ENCODE measurements at regions of chr9 and their contacts with region 1.

Region 1: GRCh38 chr9:7053903-7054302 is 296.1 kb downstream of the KDM4C start:
- DNase-seq: no peak
- H3K4me3 ChIP-seq: no peak overlapping the region
- H3K27ac ChIP-seq: no peak overlapping the region
- H3K4me1 ChIP-seq: no peaks in the 10 kb centered on the region
- H3K27me3 ChIP-seq: no peaks in the 10 kb centered on the region
- CTCF ChIP-seq: no peak

Region 2: GRCh38 chr9:6230037-6230760 is 823.7 kb before region 1 on chr9:
- CTCF ChIA-PET with region 1: no interaction called
- POLR2A ChIA-PET with region 1: no interaction called
- intact Hi-C with region 1: no loop called
- DNase-seq: no peak
- H3K4me3 ChIP-seq: no peak overlapping the region
- H3K27ac ChIP-seq: no peak overlapping the region
- H3K4me1 ChIP-seq: no peaks in the 10 kb centered on the region; the same call in 1 of the 2 replicates
- H3K27me3 ChIP-seq: no peaks in the 10 kb centered on the region
- CTCF ChIP-seq: no peak

Region 3: DNA sequence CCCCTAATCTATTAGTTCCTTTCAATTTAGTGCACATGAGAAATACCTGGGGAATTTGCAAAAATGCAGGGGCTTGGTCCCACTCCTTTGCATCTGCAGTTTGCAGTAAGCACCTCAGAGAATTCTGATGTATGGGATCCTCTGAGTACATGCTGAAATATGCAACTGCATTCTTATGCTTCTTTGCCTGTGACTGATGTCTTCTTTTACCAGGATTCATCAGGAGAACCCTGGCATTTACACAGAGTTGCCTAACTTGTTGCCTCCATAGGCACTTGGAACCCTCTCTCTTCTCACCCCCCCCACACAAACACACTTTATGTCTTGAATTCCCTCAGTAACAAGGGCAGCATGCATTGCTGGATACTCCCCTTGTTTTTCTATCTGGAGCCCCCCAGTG is 123.1 kb before region 1 on chr9:
- CTCF ChIA-PET with region 1: no interaction called
- POLR2A ChIA-PET with region 1: no interaction called
- intact Hi-C with region 1: no loop called
- DNase-seq: no peak
- H3K4me3 ChIP-seq: no peak overlapping the region
- H3K27ac ChIP-seq: no peak overlapping the region
- H3K4me1 ChIP-seq: no peaks in the 10 kb centered on the region
- H3K27me3 ChIP-seq: no peaks in the 10 kb centered on the region
- CTCF ChIP-seq: no peak

Region 4: GRCh38 chr9:7536310-7536939 is 482.5 kb after region 1 on chr9:
- CTCF ChIA-PET with region 1: no interaction called
- POLR2A ChIA-PET with region 1: no interaction called
- intact Hi-C with region 1: loop called (anchors 5 kb)
- DNase-seq: peak in 1 of 2 experiments; percentile 1
- H3K4me3 ChIP-seq: no peak overlapping the region
- H3K27ac ChIP-seq: no peak overlapping the region
- H3K4me1 ChIP-seq: no peaks in the 10 kb centered on the region
- H3K27me3 ChIP-seq: no peaks in the 10 kb centered on the region; the same call in 1 of the 2 replicates
- CTCF ChIP-seq: peak; percentile 52

Region 5: GRCh38 chr9:8030095-8030494 is 976.2 kb after region 1 on chr9:
- CTCF ChIA-PET with region 1: no interaction called
- POLR2A ChIA-PET with region 1: no interaction called
- intact Hi-C with region 1: no loop called
- DNase-seq: no peak
- H3K4me3 ChIP-seq: no peak overlapping the region
- H3K27ac ChIP-seq: no peak overlapping the region
- H3K4me1 ChIP-seq: no peaks in the 10 kb centered on the region
- H3K27me3 ChIP-seq: no peaks in the 10 kb centered on the region
- CTCF ChIP-seq: no peak

Measured in PC-9 (cell line).